Mammary epithelial cell (primary cell): ENCODE measurements at regions of chr20 and their contacts with region 1.

Region 1: DNA sequence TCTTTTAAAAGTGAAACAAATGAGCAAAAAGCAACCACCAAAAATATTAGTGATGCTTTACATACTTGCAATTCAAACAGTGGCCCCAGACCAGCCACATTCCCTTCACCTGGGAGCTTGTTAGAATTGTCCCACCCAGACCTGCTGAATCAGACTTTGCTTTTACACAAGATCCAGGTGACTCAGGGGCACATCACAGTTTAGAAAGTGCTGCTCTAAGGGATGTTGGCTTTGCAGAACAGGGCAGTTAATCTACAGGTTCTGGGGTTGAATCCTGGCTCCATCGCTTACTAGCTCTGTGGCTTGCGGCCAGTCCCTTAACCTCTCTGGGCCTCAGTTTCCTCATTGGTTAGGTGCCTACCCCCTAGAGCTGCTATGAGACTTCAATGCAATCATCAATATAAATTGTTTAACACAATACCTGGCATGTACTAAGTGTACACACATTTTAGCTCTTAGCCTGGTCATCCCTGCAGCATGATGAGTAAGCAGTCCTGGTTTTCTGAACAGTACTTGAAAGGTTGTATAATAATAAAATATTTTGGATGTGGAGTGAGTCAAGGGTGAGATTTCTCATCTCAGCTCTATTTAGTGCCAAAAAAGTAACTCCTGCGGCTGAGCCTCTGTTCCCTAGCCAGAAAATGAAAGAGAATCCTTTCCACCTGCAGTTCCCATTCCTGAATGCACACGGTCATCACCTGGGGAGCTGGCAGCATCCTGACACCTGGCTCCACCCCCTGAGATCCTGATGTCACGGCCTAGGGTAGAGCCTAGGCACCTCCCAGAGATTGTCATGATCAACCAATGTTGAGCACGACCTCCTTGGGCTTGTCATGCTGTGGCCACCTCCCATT is 162.7 kb downstream of the ANKRD60 start:
- DNase-seq: peak; percentile 90
- H3K4me3 ChIP-seq: no peak overlapping the region
- H3K27ac ChIP-seq: peak overlapping the region; percentile 53
- H3K4me1 ChIP-seq: peaks cover 22% of the 10 kb centered on the region
- H3K27me3 ChIP-seq: no peaks in the 10 kb centered on the region
- CTCF ChIP-seq: no peak

Region 2: DNA sequence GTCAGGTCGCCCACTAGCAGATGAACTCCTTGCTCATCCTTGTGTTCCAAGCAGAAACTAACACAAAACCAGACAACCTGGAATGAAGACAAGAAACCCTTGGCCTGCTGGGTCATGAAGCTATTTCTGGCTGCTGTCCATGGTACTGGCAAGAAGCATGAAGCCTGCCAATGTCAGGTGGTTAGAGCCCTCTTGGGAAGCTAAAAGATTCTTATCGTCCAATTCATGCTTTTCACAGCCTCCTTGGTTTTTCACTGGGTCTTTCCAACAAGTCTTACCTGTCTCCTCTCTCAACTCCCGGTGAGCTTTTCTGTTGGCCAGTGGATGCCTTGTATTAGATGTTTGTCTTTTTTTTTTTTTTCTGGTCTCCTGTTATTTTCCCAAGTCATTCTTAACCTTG is 17.6 kb before region 1 on chr20:
- CTCF ChIA-PET with region 1: no interaction called
- dilution Hi-C with region 1: no loop called
- in situ Hi-C with region 1: no loop called
- intact Hi-C with region 1: loop called (anchors 2 kb)
- DNase-seq: peak; percentile 48
- H3K4me3 ChIP-seq: no peak overlapping the region
- H3K27ac ChIP-seq: no peak overlapping the region
- H3K4me1 ChIP-seq: no peaks in the 10 kb centered on the region
- H3K27me3 ChIP-seq: no peaks in the 10 kb centered on the region
- CTCF ChIP-seq: no peak

Region 3: GRCh38 chr20:58228484-58229197 is 162.9 kb after region 1 on chr20 and contains the start of gene ANKRD60:
- CTCF ChIA-PET with region 1: no interaction called
- dilution Hi-C with region 1: no loop called
- in situ Hi-C with region 1: no loop called
- intact Hi-C with region 1: no loop called
- DNase-seq: no peak
- H3K4me3 ChIP-seq: no peak within 1 kb of the TSS
- H3K27ac ChIP-seq: no peak within 1 kb of the TSS
- H3K4me1 ChIP-seq: no peaks in the 10 kb centered on the region
- H3K27me3 ChIP-seq: peaks cover 11% of the 10 kb centered on the region
- CTCF ChIP-seq: no peak
- total RNA-seq, gene ANKRD60: not detected